ENCODE measurements at regions of chr1 and their contacts with region 1.

Region 1: DNA sequence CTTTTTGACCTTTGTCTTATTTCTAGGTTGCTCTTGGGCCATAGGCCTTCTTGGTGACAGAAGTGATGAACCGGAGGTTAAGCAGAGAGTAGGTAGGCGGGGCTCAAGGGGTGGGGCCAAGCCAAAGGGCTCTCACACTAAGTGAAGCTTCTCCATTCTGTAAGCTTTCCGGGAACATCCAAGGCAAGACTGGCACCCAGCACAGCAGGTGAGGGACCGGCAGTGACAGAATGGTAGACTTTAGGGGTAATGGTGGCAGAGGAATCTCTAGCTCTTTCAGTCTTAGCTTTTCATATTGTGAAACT is at the start of gene TNFAIP8L2:
- DNase-seq: peak in 1 of 5 donors; percentile 77
- H3K4me3 ChIP-seq: peak within 1 kb of the TSS in 1 of 3 donors; percentile 47
- H3K27ac ChIP-seq: peak within 1 kb of the TSS in 1 of 2 donors; percentile 47
- H3K4me1 ChIP-seq: no peaks in the 10 kb centered on the region
- H3K27me3 ChIP-seq: no peaks in the 10 kb centered on the region
- CTCF ChIP-seq: no peak
- total RNA-seq, gene TNFAIP8L2: 6.3 TPM

Region 2: GRCh38 chr1:151106894-151107293 is 49.6 kb before region 1 on chr1:
- intact Hi-C with region 1: loop called (anchors 10 kb)
- DNase-seq: no peak
- H3K4me3 ChIP-seq: no peak overlapping the region
- H3K27ac ChIP-seq: no peak overlapping the region
- H3K4me1 ChIP-seq: no peaks in the 10 kb centered on the region
- H3K27me3 ChIP-seq: no peaks in the 10 kb centered on the region
- CTCF ChIP-seq: no peak

Measured in kidney (tissue), 22 donors.